ENCODE measurements at regions of chr15 and their contacts with region 1.

Region 1: GRCh38 chr15:99565299-99566156 is at the start of gene MEF2A:
- DNase-seq: peak; percentile 97
- ATAC-seq: peak; percentile 81
- total RNA-seq, gene MEF2A: 135 TPM

Region 2: DNA sequence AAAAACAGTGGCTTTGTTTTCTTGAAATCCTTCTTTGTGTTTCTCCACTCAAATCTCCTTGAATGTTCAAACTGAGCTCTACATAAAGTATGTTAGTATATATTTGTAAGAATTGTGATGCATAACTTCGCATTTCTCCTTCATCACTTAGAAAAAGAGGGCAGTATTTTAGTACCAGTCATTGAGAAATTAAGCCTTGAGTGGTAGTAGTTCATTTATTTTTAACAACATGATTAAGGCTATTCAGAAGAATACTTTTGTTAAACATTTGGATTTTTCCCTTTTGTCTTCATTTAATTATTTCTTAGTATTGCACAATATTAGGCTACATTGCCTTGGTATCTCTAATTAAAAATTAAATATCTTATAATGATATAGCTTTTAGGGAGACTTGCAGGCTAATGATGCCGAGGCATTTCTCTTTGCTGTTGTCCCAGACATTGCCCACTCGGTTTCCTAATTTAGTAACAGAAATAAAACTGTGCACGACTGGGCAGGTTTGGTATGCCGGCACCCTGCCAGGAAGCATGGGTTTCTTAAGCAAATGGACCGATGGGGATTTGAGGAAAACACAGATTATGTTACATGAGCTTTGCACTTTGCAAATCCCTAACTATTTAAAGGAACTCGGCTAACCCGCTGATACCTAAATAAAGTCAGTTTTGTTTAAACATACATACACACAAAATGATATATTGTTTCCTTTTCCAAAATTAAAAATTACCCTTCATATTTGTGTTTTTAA is 259.6 kb before region 1 on chr15:
- intact Hi-C with region 1: loop called (anchors 5 kb)
- DNase-seq: no peak
- ATAC-seq: no peak

Region 3: DNA sequence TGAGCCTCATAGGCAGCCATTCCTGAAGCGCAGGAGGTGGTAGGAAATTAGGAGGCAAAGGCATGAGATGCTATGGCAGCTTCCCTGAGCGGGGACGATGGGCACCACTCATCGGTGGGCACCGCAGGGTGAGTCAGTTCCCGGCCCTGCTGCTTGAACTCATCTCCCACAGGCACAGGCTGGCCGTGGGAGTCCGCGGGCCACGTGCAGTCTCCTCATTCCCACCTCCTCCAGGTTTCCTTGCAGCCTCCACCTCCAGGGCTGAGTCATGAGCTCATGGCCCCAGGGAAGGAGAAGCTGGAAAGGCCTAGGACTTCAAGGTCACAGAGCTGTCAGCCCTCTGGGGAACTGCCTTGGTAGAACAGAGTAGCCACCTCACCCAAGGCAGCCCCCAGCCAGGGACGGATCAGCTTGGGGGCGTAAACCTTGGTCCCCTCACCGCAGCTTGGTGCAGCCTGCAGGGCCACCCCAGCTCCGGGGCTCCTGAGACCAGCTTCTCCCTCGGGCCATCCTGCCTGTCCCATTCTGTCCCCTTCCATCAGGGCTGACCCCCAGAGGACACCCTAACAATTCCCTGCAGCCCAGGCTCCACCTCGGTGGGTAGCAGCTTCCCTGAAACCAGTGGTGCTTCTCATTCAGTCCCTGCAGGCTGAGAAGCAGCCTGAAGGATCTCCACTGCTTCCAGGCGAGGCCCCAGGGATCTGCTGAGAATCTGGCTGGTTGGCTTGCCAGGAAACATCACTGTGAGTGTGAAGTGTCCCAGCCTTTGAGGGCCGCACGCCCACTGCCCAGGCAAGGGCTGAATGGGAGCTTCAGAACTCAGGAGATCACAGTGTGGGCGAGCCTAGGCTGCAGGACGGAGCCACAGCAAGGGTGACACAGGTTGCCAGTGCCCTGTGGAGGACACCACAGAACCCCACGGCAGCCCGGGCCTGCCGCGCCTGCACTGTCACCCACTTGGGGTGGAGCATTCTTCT is 150.5 kb before region 1 on chr15:
- intact Hi-C with region 1: no loop called
- DNase-seq: no peak
- ATAC-seq: no peak

Region 4: GRCh38 chr15:99424978-99425656 is 140.4 kb before region 1 on chr15:
- intact Hi-C with region 1: loop called (anchors 1 kb)
- DNase-seq: peak; percentile 74
- ATAC-seq: peak; percentile 79

Region 5: GRCh38 chr15:99486371-99487336 is 78.9 kb before region 1 on chr15:
- intact Hi-C with region 1: loop called (anchors 1 kb)
- DNase-seq: peak; percentile 90
- ATAC-seq: peak; percentile 89

Region 6: GRCh38 chr15:99704444-99704838 is 138.9 kb after region 1 on chr15:
- intact Hi-C with region 1: loop called (anchors 2 kb)
- DNase-seq: no peak
- ATAC-seq: peak; percentile 83